A673 (cell line): ENCODE measurements at regions of chr10 and their contacts with region 1.

Region 1: GRCh38 chr10:12264204-12264940 is 68.4 kb downstream of the CDC123 start:
- DNase-seq: peak; percentile 95
- H3K4me3 ChIP-seq: peak overlapping the region; percentile 36
- H3K27ac ChIP-seq: peak overlapping the region; percentile 56
- H3K4me1 ChIP-seq: peaks cover 12% of the 10 kb centered on the region
- H3K27me3 ChIP-seq: no peaks in the 10 kb centered on the region
- CTCF ChIP-seq: peak; percentile 87

Region 2: DNA sequence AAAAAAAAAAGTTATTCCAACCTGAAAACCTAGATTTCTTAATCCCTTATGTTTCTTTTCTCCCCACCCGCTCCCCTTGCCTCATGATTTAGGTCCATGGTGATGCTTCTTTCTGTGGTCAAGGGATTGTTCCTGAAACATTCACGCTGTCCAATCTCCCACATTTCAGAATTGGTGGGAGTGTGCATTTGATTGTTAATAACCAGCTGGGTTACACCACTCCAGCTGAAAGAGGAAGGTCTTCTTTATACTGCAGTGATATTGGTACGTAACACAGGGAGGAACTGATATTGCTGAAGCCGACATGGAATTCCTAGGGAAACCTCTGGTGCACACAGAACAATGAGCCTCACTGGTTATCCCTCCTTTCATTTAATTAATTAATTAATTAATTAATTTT is 173.0 kb before region 1 on chr10:
- CTCF ChIA-PET with region 1: no interaction called
- POLR2A ChIA-PET with region 1: no interaction called
- intact Hi-C with region 1: no loop called
- DNase-seq: no peak
- H3K4me3 ChIP-seq: no peak overlapping the region
- H3K27ac ChIP-seq: no peak overlapping the region
- H3K4me1 ChIP-seq: no peaks in the 10 kb centered on the region
- H3K27me3 ChIP-seq: no peaks in the 10 kb centered on the region
- CTCF ChIP-seq: no peak

Region 3: DNA sequence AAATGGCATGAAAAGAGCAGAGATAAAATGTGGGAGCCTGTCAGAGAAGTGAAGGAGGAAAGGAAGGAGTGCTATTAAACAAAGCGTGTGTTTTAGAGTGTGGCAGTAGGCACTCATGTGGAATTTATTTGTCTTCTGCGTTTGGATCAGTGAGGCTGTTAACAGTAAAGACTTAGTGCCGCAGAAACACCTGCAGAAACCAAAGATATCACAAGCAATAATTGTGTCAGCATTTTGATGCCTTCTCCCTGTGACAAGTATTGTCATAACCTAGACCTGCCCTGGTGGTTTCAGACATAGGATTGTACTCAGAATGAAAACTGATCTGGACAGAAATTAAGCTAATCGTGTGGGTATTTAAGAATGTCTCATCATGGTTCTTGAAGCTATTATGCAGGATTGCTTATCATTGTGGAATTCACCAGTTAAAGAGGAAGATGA is 276.0 kb after region 1 on chr10:
- CTCF ChIA-PET with region 1: no interaction called
- POLR2A ChIA-PET with region 1: no interaction called
- intact Hi-C with region 1: loop called (anchors 5 kb)
- DNase-seq: peak; percentile 63
- H3K4me3 ChIP-seq: no peak overlapping the region
- H3K27ac ChIP-seq: peak overlapping the region; percentile 96
- H3K4me1 ChIP-seq: peaks cover 63% of the 10 kb centered on the region
- H3K27me3 ChIP-seq: no peaks in the 10 kb centered on the region
- CTCF ChIP-seq: no peak

Region 4: DNA sequence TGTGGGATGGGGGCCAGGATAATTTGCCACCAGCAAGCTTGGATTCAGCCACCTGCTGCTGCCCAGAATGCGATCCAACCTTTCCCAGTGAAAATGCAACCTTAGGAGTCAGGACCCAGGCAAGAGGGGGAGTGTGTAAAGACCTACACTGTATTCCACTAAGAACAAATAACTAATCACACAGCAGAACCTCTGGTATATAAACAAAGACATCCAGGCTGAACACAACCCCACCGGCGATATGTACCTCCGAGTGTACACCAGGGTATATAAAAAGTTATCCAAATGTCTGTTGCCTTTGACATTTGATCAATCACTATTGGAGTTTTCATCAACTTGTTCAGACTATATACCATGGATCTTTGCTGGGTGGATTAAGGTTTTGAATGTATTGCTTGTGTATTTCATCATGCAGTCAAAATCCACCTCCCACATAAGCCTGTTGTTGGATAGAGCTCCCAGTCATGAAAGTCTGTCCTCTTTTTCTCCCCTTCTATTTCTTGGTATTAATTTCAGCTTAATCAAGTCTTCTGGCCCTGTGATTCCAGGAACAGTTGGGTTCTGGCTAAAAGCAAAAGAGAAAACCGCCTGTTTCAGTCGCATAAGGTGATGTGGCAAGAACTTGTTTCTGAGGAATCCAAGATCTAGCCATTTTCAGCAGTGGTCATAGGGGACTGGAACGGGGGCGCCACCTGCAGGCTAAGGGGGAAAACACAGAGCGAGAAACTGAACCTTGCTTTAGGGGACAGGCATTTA is 446.4 kb after region 1 on chr10:
- CTCF ChIA-PET with region 1: interaction called, 8 read pairs
- POLR2A ChIA-PET with region 1: no interaction called
- intact Hi-C with region 1: loop called (anchors 1 kb)
- DNase-seq: peak; percentile 92
- H3K4me3 ChIP-seq: no peak overlapping the region
- H3K27ac ChIP-seq: peak overlapping the region; percentile 88
- H3K4me1 ChIP-seq: peaks cover 58% of the 10 kb centered on the region
- H3K27me3 ChIP-seq: no peaks in the 10 kb centered on the region
- CTCF ChIP-seq: peak; percentile 98

Region 5: DNA sequence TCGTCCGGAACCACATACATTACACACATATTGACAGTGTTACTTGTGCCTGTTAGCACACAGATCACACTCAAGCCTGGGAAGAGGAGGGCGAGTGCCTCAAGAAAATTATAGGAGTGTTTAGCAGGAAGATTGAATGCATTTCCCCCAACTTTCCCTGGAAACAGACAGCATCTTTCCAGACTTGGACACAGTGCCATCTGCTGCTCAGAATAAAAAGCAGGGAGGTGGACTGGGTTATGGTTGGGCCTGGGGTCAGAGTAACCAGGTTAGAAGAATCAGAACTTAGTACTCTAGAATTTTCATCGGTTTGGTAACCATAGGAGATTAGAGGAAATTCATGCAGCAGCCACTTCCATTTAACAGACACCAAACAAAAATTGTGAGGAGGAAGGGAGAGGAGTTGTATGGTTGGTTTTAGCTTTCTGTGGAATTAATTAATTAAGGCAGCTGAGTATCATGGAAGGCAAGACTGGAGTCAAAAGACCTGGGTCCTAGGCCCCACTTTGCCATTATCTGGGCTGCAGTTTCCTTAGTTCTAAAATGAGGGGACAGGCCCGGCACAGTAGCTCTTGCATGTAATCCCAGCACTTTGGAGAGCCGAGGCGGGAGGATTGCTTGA is 792.2 kb after region 1 on chr10:
- CTCF ChIA-PET with region 1: interaction called, 5 read pairs
- POLR2A ChIA-PET with region 1: no interaction called
- intact Hi-C with region 1: loop called (anchors 5 kb)
- DNase-seq: peak; percentile 28
- H3K4me3 ChIP-seq: no peak overlapping the region
- H3K27ac ChIP-seq: no peak overlapping the region
- H3K4me1 ChIP-seq: no peaks in the 10 kb centered on the region
- H3K27me3 ChIP-seq: no peaks in the 10 kb centered on the region
- CTCF ChIP-seq: peak; percentile 65